MCF 10A (cell line): ENCODE measurements at regions of chr16 and their contacts with region 1.

Region 1: GRCh38 chr16:23182460-23183309 is at the start of gene SCNN1G:
- DNase-seq: peak; percentile 89
- H3K4me3 Mint-ChIP-seq: peak within 1 kb of the TSS; percentile 84
- H3K27ac Mint-ChIP-seq: peak within 1 kb of the TSS; percentile 35
- H3K4me1 Mint-ChIP-seq: peaks cover 24% of the 10 kb centered on the region
- H3K27me3 Mint-ChIP-seq: no peaks in the 10 kb centered on the region
- CTCF ChIP-seq: peak; percentile 99
- total RNA-seq, gene SCNN1G: 7.9 and 11.9 TPM in 2 replicates

Region 2: DNA sequence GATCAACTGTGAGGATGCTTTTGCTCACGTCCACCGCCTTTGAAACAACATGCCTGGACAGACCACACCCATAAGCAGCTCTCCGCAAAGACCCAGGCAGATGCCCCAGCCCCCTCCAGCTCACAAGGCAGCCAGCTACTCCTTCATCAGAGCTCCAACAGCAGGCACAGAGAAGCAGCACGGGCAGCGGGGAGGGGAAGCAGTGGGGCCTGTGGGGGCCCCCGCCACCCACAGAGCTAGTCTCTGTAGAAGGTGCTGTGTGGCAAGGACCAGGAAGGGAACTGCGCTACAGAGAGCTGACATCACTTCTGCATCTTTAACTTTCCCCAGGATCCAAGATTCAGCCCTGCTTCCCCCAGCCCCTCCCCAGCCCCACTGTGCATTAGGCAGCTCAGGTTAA is 10.1 kb before region 1 on chr16:
- CTCF ChIA-PET with region 1: interaction called, 13 read pairs
- POLR2A ChIA-PET with region 1: interaction called, 4 read pairs
- intact Hi-C with region 1: no loop called
- DNase-seq: no peak
- H3K4me3 Mint-ChIP-seq: no peak overlapping the region
- H3K27ac Mint-ChIP-seq: no peak overlapping the region
- H3K4me1 Mint-ChIP-seq: peaks cover 13% of the 10 kb centered on the region
- H3K27me3 Mint-ChIP-seq: peaks cover 16% of the 10 kb centered on the region
- CTCF ChIP-seq: no peak

Region 3: DNA sequence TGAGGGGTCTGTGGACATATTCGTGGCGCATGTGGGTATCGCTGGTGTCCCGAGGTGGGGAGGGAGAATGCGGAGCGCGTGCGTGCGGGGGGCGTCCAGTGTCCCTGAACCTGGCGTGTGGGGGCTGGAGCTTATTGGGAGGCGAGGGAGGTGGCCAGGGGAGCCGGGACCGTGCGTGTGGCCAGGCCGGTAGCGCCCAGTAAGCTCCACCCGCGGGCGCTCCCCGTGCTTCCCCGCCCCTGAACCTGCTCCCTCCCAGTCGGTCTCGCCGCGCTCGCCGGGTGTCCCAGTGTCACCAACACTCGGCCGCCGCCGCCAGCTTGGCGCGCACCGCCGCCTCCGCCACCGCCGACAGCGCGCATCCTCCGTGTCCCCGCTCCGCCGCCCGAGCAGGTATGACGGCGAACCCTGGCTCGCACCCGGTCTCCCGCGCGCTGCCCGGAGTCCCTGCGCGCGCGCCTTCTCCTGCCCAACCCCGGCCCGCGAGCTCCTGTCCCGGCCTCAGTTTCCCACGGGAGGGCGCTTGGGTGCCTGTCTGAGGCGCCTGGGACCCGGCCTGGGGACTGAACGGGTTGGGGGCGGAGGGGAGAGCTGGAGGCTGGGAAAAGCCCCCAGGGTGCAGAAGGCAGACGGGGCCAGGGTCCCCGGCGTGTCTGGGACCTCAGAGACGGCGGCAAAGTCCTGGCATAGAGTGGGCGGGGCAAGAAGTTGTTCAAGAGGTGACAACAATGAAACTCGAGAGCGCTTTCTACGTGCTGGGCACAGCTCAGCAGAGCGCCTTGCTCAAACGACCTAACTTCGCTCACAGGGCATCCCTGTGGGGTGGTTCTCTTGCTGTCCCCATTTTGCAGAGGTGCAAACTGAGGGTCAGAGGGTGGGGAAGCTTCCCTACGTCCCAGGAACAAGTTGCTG is 119.6 kb after region 1 on chr16 and contains the start of gene SCNN1B:
- CTCF ChIA-PET with region 1: interaction called, 16 read pairs
- POLR2A ChIA-PET with region 1: no interaction called
- intact Hi-C with region 1: loop called (anchors 5 kb)
- DNase-seq: no peak
- H3K4me3 Mint-ChIP-seq: peak within 1 kb of the TSS; percentile 74
- H3K27ac Mint-ChIP-seq: no peak within 1 kb of the TSS
- H3K4me1 Mint-ChIP-seq: peaks cover 20% of the 10 kb centered on the region
- H3K27me3 Mint-ChIP-seq: no peaks in the 10 kb centered on the region
- CTCF ChIP-seq: no peak
- total RNA-seq, gene SCNN1B: 9.5 and 12.5 TPM in 2 replicates

Region 4: GRCh38 chr16:23391381-23392222 is 208.9 kb after region 1 on chr16:
- CTCF ChIA-PET with region 1: interaction called, 17 read pairs
- POLR2A ChIA-PET with region 1: interaction called, 8 read pairs
- intact Hi-C with region 1: no loop called
- DNase-seq: peak; percentile 29
- H3K4me3 Mint-ChIP-seq: no peak overlapping the region
- H3K27ac Mint-ChIP-seq: peak overlapping the region; percentile 92
- H3K4me1 Mint-ChIP-seq: peaks cover 36% of the 10 kb centered on the region
- H3K27me3 Mint-ChIP-seq: no peaks in the 10 kb centered on the region
- CTCF ChIP-seq: no peak